Ascending aorta (tissue), 2 donors: ENCODE measurements at regions of chr14 and their contacts with region 1.

Region 1: DNA sequence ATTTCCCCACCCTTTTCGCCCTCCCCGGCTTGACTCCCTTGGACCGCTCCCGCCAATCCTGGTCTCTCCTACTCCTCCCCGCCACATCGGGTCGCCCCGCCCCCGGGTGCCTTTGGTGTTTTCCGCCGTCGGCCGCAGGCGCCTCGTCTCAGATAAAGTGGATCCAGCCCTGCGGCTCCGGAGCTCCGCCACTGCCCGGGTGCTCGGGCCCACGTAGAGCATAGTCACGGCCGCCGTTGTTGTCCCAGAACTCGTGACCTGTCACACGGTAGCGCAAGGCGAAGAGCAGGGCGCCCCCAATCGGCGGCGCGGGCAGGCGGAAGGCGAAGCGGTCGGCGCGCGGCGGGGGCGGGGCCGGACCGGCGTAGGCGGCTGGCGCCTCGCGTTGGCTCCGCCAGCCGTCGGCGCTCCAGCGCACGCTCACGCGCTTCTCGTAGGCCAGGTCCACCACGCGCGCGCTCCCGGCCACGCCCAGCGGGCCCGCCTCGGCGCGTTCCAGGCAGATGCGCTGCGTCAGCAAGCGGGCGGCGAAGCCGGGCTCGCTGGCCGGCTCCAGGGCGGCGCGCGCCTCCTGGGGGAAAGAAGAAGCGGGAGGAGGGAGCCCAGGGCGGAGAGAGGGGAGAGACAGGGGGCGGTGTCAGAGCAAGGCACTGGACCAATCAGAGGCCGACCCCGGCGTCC is 1.2 kb downstream of the PPP1R3E start:
- DNase-seq: peak; percentile 94 to 99
- H3K4me3 ChIP-seq: peak overlapping the region; percentile 85 to 93
- H3K27ac ChIP-seq: peak overlapping the region; percentile 98 to 99
- H3K4me1 ChIP-seq: peaks cover 15 to 17% of the 10 kb centered on the region in 2 donors
- H3K27me3 ChIP-seq: no peaks in the 10 kb centered on the region
- CTCF ChIP-seq: peak; percentile 56 to 87 (median 66)

Region 2: GRCh38 chr14:22829661-22830442 is 471.6 kb before region 1 on chr14 and contains the start of gene MRPL52:
- intact Hi-C with region 1: loop called (anchors 10 kb)
- DNase-seq: peak; percentile 70 to 95
- H3K4me3 ChIP-seq: peak within 1 kb of the TSS; percentile 83 to 98
- H3K27ac ChIP-seq: peak within 1 kb of the TSS; percentile 61 to 81
- H3K4me1 ChIP-seq: peaks cover 0 to 7% of the 10 kb centered on the region in 2 donors
- H3K27me3 ChIP-seq: no peaks in the 10 kb centered on the region
- CTCF ChIP-seq: no peak
- total RNA-seq, gene MRPL52: 6.6 TPM

Region 3: GRCh38 chr14:23095196-23096108 is 206.0 kb before region 1 on chr14 and contains the start of gene C14orf119:
- intact Hi-C with region 1: loop called (anchors 2 kb)
- DNase-seq: peak; percentile 99 to 100
- H3K4me3 ChIP-seq: peak within 1 kb of the TSS; percentile 78 to 86
- H3K27ac ChIP-seq: peak within 1 kb of the TSS; percentile 97 to 98
- H3K4me1 ChIP-seq: peaks cover 0 to 22% of the 10 kb centered on the region in 2 donors
- H3K27me3 ChIP-seq: no peaks in the 10 kb centered on the region
- CTCF ChIP-seq: no peak
- total RNA-seq, gene C14orf119: 2.2 TPM

Region 4: GRCh38 chr14:23186913-23187654 is 114.3 kb before region 1 on chr14:
- intact Hi-C with region 1: loop called (anchors 5 kb)
- DNase-seq: peak in 1 of 2 donors; percentile 77
- H3K4me3 ChIP-seq: no peak overlapping the region
- H3K27ac ChIP-seq: no peak overlapping the region
- H3K4me1 ChIP-seq: no peaks in the 10 kb centered on the region
- H3K27me3 ChIP-seq: no peaks in the 10 kb centered on the region
- CTCF ChIP-seq: peak; percentile 82 to 85 (median 85)

Region 5: GRCh38 chr14:23286020-23286905 is 15.2 kb before region 1 on chr14 and contains the start of gene HOMEZ:
- intact Hi-C with region 1: loop called (anchors 1 kb)
- DNase-seq: peak; percentile 99 to 100
- H3K4me3 ChIP-seq: peak within 1 kb of the TSS; percentile 78 to 100
- H3K27ac ChIP-seq: peak within 1 kb of the TSS; percentile 95 to 99
- H3K4me1 ChIP-seq: peaks cover 0 to 11% of the 10 kb centered on the region in 2 donors
- H3K27me3 ChIP-seq: no peaks in the 10 kb centered on the region
- CTCF ChIP-seq: peak in 2 of 3 experiments; percentile 10
- total RNA-seq, gene HOMEZ: 7.3 TPM

Region 6: GRCh38 chr14:23469127-23469905 is 167.9 kb after region 1 on chr14 and contains the start of gene NGDN:
- intact Hi-C with region 1: loop called (anchors 1 kb)
- DNase-seq: peak; percentile 89 to 99
- H3K4me3 ChIP-seq: peak within 1 kb of the TSS; percentile 87 to 94
- H3K27ac ChIP-seq: peak within 1 kb of the TSS; percentile 83 to 85
- H3K4me1 ChIP-seq: peaks cover 0 to 7% of the 10 kb centered on the region in 2 donors
- H3K27me3 ChIP-seq: no peaks in the 10 kb centered on the region
- CTCF ChIP-seq: peak; percentile 79 to 85 (median 82)
- total RNA-seq, gene NGDN: 7.8 TPM

Region 7: DNA sequence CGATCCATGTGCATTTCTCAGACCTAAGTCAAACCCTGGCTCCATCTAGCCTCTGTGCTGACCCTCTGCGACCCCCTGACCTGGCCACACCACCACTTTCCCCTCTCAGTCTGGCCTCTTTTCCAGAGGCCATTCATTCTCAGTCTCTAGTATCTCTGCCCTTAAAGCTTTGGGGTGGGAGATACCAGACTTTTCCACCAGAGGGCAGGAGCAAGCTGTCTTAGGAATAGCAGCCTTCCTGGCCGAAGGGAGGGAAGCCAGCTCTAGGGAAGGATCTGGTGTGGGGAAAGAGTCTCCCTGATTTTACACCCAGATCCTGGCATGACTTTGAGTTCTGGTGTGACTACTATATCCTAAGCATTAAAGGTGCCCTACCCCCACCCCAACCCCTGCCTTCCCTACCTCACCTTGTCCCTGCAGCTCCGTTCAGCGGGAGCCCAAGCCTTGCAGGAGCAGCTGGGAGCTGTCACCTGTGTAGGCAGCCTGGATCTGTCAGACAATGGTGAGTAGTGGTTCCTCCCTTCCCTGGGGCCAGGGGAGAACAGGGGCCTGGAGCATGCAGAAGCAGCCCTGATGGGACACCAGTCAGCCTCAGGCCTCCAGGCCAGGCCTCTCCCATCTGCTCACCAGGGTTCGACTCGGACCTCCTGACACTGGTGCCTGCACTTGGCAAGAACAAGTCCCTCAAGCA is 757.0 kb after region 1 on chr14:
- intact Hi-C with region 1: no loop called
- DNase-seq: peak in 1 of 2 donors; percentile 86
- H3K4me3 ChIP-seq: no peak overlapping the region
- H3K27ac ChIP-seq: no peak overlapping the region
- H3K4me1 ChIP-seq: no peaks in the 10 kb centered on the region
- H3K27me3 ChIP-seq: no peaks in the 10 kb centered on the region
- CTCF ChIP-seq: peak; percentile 61 to 92 (median 91)

Region 8: GRCh38 chr14:24241829-24242443 is 940.5 kb after region 1 on chr14:
- intact Hi-C with region 1: loop called (anchors 5 kb)
- DNase-seq: peak in 1 of 2 donors; percentile 94
- H3K4me3 ChIP-seq: peak overlapping the region; percentile 81 to 95
- H3K27ac ChIP-seq: peak overlapping the region; percentile 94 to 99
- H3K4me1 ChIP-seq: peaks cover 15 to 32% of the 10 kb centered on the region in 2 donors
- H3K27me3 ChIP-seq: no peaks in the 10 kb centered on the region
- CTCF ChIP-seq: peak; percentile 54 to 67 (median 56)